Activated T-helper 1 cell treated with anti-CD3 and anti-CD28 coated beads, Interleukin-12 subunit alpha, Interleukin-12 subunit beta, Interleukin-2, Interleukin-4 antibody, amounts not matched to agents 30 ng/mL and 10 ng/mL and 1 ng/mL, durations not matched to agents 14 hours and 24 hours and 36 hours (primary cell): ENCODE measurements at regions of chr11 and their contacts with region 1.

Region 1: GRCh38 chr11:12159351-12160099 is 49.1 kb downstream of the MICAL2 start:
- DNase-seq: no peak
- H3K4me3 Mint-ChIP-seq: no peak overlapping the region
- H3K27ac Mint-ChIP-seq: peak overlapping the region; percentile 88
- H3K4me1 Mint-ChIP-seq: peaks cover 95% of the 10 kb centered on the region
- H3K27me3 Mint-ChIP-seq: no peaks in the 10 kb centered on the region

Region 2: GRCh38 chr11:12195768-12196167 is 36.2 kb after region 1 on chr11:
- intact Hi-C with region 1: loop called (anchors 1 kb)
- DNase-seq: peak; percentile 62
- H3K4me3 Mint-ChIP-seq: peak overlapping the region; percentile 97
- H3K27ac Mint-ChIP-seq: peak overlapping the region; percentile 96
- H3K4me1 Mint-ChIP-seq: peaks cover 69% of the 10 kb centered on the region
- H3K27me3 Mint-ChIP-seq: no peaks in the 10 kb centered on the region